ENCODE measurements at regions of chr1 and their contacts with region 1.

Region 1: DNA sequence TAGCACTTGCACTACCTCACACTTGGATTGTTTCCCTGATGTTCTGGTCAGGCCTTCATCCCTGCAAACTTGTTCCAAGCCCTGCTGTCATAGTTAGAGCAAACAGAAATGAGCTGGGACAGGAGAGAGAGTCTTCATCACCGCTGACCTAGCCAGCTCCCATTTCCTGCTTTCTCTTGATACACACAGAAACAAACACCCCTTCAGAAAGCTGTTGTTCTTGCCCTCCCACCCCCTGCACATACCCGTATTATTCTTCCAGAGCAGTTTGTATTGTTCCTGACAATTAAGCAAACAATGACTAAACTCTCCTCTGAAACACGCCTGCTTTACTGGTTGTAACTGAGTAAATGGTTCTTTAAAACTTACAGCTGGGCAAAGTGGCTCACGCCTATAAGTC is 2.9 kb upstream of the SYT2 start:
- DNase-seq: no peak
- ATAC-seq: no peak

Region 2: DNA sequence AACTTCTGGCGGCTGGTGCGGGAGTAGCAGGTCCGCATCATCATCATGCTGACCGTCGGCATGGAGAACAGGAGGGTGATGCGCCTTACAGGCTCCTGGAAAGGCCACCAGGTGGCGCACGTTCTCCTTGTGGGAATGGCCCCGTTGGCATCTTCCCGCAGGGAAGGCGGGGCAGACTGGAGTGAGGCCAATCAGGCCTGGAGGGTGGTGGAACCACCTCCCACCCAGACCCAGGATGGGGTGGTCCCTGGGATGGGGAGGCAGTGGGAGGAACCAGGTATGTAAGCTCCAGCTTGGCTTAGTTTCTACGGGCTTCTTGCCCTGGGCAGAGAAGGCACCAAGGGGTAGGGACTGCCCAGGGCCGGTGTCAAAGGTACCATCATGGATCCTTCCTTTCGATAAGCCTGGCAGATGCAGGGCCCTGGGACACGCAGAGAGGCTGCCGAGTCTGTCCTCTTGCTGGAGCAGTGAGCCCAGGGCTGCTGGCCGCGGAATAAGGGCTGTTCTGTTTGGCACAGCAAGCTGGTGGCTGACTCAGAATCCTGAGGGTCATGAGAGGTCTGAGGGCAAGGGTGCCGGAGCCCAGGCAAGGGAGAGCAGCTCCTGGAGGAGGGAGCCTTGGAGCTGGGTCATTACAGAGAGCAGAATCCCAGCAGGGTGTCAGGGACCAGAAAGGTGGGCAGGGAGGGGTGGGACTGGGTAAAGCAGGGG is 528.2 kb before region 1 on chr1:
- intact Hi-C with region 1: loop called (anchors 2 to 5 kb)
- DNase-seq: peak; percentile 85
- ATAC-seq: peak; percentile 75 to 79

Region 3: DNA sequence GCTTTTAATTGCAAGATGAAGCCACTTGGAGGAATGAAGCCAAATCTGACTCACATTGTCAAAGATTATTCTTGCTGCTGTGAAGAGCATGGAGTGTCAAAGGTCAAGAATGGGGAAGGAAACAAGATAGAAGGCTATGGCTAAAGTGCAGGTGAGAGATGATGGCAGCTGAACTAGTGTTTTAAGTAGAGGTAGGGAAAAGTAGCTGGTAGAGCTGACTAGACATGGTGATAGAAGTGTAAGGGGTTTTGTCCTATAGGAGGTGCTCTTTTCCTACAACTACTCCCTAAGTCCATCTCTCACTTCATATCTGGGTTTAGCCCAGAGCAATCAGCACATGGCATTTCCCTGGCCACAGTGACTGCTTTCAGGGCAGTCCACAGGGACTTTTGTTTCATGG is 383.2 kb before region 1 on chr1:
- intact Hi-C with region 1: loop called in 1 of 2 experiments (anchors 10 kb)
- DNase-seq: no peak
- ATAC-seq: no peak

Region 4: DNA sequence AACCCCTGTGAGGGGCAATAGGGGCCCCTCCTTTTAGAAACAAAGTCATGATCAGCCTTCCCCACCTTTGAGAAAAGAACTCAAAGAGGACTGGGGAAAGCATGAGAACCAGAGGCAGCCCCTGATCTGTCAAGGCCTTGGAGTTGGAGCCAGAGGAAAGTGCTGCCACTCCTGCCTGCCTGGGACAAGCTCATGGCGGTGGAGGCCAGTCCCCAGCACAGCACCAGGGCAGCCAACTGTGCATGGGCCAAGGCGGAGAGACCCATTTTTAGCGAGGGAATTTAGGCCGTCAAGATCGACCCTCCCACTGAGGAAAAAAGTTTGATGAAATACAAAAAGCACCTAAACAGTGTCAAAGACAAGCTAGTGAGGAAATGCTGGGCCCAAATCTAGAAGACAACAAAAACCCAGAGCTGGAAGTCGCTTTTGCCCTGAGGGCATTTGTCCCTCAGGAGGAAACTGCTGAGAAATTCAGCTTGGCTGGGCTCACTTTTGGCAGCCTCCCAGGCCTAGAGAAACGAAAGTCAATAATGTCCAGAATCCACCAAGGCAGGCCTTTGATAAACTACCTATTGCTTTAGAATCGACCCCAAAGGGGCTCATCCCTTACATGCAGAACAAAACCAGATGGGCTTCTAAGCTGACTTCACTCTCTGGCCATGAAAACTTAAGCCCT is 41.9 kb before region 1 on chr1:
- intact Hi-C with region 1: no loop called
- DNase-seq: no peak
- ATAC-seq: no peak

Region 5: DNA sequence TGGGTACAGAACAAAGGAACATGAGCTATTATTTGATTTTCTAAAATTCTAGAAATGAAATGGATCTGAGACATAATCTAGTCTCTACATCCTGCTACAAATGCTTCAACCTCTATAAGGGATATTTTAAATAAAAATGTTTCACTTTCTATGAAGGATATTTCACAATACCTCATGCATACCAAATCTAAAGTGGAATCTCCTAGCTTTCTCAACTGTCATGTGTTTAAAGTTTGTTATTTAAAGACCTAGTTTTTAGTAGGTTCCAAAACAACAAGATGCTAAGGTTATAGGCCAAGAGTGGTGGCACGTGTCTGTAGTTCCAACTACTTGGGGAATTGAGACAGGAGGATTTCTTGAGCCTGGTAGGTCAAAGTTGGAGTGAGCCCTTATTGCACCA is 47.5 kb after region 1 on chr1:
- intact Hi-C with region 1: no loop called
- DNase-seq: no peak
- ATAC-seq: no peak

Measured in left cardiac atrium (tissue), 4 donors.